Activated naive CD8-positive, alpha-beta T cell treated with anti-CD3 and anti-CD28 coated beads, Interleukin-2, amount 10 ng/mL, durations not matched to agents 7 days and 5 days (primary cell): ENCODE measurements at regions of chr14 and their contacts with region 1.

Region 1: DNA sequence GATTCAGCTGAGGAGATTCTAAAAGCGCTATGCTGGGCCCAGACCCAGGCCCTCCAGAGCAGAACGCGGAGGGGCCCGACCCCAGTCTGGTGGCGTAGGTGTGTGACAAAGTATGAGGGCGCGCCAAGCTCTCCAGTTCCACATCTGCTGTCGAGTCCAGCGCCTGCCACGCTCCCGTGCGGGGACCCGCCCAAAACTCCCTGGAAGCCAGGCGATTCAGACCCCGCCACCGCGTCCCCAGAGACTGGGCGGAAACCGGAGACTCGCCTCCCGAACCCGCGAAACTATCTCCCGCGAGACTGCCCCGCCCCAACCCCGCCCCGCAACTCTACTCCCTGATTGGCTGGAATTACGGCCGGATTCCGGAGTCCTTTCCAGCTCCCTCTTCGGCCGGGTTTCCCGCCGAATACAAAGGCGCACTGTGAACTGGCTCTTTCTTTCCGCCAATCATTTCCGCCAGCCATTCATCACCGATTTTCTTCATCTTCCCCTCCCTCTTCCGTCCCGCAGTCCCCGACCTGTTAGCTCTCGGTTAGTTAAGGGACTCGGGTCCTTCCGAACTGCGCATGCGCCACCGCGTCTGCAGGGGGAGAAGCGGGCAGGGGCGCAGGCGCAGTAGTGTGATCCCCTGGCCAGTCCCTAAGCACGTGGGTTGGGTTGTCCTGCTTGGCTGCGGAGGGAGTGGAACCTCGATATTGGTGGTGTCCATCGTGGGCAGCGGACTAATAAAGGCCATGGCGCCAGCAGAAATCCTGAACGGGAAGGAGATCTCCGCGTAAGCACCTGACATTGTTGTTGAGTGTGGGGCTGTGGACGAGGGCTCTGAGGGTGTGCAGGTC is at the start of gene MTHFD1:
- DNase-seq: peak; percentile 98
- ATAC-seq: peak; percentile 95
- H3K4me3 Mint-ChIP-seq: peak within 1 kb of the TSS; percentile 84
- H3K27ac Mint-ChIP-seq: peak within 1 kb of the TSS; percentile 93
- H3K4me1 Mint-ChIP-seq: peaks cover 32% of the 10 kb centered on the region
- H3K27me3 Mint-ChIP-seq: no peaks in the 10 kb centered on the region
- total RNA-seq, gene MTHFD1: 146 to 147 TPM

Region 2: GRCh38 chr14:64338616-64339316 is 49.1 kb before region 1 on chr14:
- POLR2A ChIA-PET with region 1: interaction called, 25 read pairs
- DNase-seq: peak; percentile 87
- ATAC-seq: peak; percentile 88
- H3K4me3 Mint-ChIP-seq: peak overlapping the region; percentile 95
- H3K27ac Mint-ChIP-seq: peak overlapping the region; percentile 94
- H3K4me1 Mint-ChIP-seq: peaks cover 24% of the 10 kb centered on the region
- H3K27me3 Mint-ChIP-seq: no peaks in the 10 kb centered on the region

Region 3: GRCh38 chr14:64405295-64405694 is 17.4 kb after region 1 on chr14:
- POLR2A ChIA-PET with region 1: interaction called, 10 read pairs
- DNase-seq: no peak
- ATAC-seq: no peak
- H3K4me3 Mint-ChIP-seq: no peak overlapping the region
- H3K27ac Mint-ChIP-seq: no peak overlapping the region
- H3K4me1 Mint-ChIP-seq: peaks cover 23% of the 10 kb centered on the region
- H3K27me3 Mint-ChIP-seq: no peaks in the 10 kb centered on the region